Astrocyte of the cerebellum (primary cell): ENCODE measurements at regions of chr12 and their contacts with region 1.

Region 1: DNA sequence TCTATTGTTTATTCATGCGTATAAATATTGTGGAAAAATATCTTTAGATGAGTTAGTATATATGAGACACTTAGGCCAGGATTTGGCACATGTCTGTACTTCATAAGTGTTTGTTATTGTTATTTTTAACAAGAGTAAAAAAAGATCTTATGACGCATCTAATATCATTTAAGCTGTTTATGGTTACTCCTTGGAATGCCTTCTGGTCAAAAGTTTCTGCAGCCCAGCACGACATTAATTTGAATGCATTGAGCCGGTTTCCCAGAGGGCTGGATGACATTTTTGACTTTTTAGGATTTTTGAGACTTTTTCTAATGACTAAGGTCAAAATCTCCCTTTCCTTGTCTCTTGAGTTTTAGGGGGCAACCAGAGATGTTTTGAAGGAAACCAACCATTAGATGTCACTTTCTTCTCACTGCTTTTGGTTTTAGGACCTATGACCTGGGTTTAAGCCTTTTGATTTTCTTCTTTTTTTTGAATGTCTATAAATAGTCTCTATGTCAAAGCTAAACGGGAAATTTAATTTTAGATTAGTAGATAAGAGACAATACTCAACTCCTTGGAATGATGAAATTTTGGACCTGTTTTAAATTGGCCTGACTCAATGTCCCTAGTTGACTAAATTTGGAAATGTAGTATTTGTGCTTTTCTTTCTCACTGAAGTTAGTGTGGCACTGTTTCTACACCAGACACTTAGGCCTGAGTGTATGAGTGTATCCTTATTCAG is 215.5 kb downstream of the AEBP2 start:
- DNase-seq: no peak
- H3K4me3 ChIP-seq: no peak overlapping the region
- CTCF ChIP-seq: no peak

Region 2: DNA sequence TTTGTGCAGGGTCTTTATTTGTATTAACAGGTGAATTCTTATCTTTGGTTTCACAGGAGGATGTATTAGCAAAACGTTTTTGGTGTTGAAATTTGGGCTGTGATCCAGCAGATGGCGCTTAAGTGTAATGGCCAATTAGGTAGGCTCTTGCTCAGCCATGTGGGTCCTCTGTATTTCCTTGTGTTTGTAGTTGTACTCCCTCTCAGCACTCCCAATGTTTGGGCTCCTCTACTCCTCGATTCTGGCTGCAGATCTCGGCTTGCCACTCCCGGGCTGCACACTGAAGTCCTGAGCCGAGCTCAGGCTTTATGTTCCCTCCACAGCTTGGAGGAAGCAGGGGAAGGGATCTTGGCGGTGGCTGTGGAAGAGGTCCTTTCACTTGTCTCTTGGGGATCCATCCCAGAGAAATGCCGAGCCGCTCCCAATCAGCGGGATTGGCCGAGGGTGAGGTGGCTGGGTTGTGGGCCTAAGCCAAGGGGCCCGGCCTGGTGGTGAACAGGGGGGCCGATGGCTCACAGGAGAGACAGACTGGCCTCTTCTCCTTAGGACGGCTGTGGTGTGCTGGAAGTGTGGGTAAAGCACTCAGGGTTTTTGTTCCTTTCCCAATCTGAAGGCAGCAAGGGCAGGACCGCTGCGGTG is 81.8 kb before region 1 on chr12:
- in situ Hi-C with region 1: loop called (anchors 5 kb)
- DNase-seq: peak; percentile 40
- H3K4me3 ChIP-seq: no peak overlapping the region
- CTCF ChIP-seq: peak; percentile 57